Motor neuron (in vitro differentiated cells): ENCODE measurements at regions of chr5 and their contacts with region 1.

Region 1: GRCh38 chr5:10627160-10627701 is 63.4 kb downstream of the ANKRD33B start:
- ATAC-seq: peak in 7 of 8 experiments; percentile 6 to 30 (median 16)
- H3K4me3 ChIP-seq: peak overlapping the region; percentile 1 to 25 (median 8)
- H3K27ac ChIP-seq: no peak overlapping the region
- H3K4me1 ChIP-seq: peaks cover 9 to 17% of the 10 kb centered on the region in 2 donors

Region 2: DNA sequence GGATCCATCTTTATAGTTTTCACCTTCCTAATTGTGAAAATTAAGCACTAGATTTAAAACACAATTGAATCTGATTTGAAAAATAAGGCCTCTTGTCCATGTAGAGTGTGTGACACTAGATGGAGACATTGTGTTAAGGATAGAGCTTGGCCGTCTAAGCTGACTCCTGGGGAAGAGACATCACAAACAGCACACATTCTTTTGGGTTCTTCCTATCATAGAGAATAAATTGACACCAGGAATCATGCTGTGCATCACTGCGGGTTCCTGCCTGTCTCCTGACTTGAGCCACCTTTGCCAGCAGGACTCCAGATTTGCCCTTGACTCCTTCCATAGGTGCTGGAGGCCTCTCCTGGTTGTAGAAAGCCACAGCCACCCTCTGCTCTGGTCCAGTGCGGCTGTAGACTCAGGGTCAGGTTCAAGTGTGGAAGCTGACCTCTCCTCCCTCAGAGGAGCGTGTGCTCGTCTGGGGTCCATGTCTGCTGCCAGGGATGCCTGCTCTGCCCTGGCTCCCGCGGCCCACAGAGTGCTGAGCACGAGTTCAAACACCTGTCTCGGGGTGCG is 174.4 kb before region 1 on chr5:
- in situ Hi-C with region 1: loop called in 6 of 9 experiments (anchors 10 to 25 kb)
- ATAC-seq: peak; percentile 51 to 88 (median 76)
- H3K4me3 ChIP-seq: no peak overlapping the region
- H3K27ac ChIP-seq: no peak overlapping the region
- H3K4me1 ChIP-seq: peaks cover 5 to 20% of the 10 kb centered on the region in 2 donors

Region 3: GRCh38 chr5:10467240-10468198 is 159.7 kb before region 1 on chr5:
- in situ Hi-C with region 1: loop called in 5 of 9 experiments (anchors 10 to 25 kb)
- ATAC-seq: peak in 4 of 8 experiments; percentile 44 to 66 (median 54)
- H3K4me3 ChIP-seq: no peak overlapping the region
- H3K27ac ChIP-seq: no peak overlapping the region
- H3K4me1 ChIP-seq: peaks cover 0 to 10% of the 10 kb centered on the region in 2 donors